ENCODE measurements at regions of chr11 and their contacts with region 1.

Region 1: GRCh38 chr11:43282607-43283440 is 29.0 kb upstream of the API5 start:
- DNase-seq: peak; percentile 25 to 54 (median 51)
- H3K4me3 ChIP-seq: no peak overlapping the region
- H3K27ac ChIP-seq: no peak overlapping the region
- H3K4me1 ChIP-seq: no peaks in the 10 kb centered on the region
- H3K27me3 ChIP-seq: peaks cover 0 to 16% (median 9%) of the 10 kb centered on the region in 5 experiments

Region 2: GRCh38 chr11:42770444-42771065 is 512.3 kb before region 1 on chr11:
- CTCF ChIA-PET with region 1: interaction called, 14 read pairs
- POLR2A ChIA-PET with region 1: no interaction called
- DNase-seq: peak; percentile 22 to 48 (median 31)
- H3K4me3 ChIP-seq: no peak overlapping the region
- H3K27ac ChIP-seq: no peak overlapping the region
- H3K4me1 ChIP-seq: no peaks in the 10 kb centered on the region
- H3K27me3 ChIP-seq: peaks cover 0 to 3% (median 0%) of the 10 kb centered on the region in 5 experiments

Region 3: DNA sequence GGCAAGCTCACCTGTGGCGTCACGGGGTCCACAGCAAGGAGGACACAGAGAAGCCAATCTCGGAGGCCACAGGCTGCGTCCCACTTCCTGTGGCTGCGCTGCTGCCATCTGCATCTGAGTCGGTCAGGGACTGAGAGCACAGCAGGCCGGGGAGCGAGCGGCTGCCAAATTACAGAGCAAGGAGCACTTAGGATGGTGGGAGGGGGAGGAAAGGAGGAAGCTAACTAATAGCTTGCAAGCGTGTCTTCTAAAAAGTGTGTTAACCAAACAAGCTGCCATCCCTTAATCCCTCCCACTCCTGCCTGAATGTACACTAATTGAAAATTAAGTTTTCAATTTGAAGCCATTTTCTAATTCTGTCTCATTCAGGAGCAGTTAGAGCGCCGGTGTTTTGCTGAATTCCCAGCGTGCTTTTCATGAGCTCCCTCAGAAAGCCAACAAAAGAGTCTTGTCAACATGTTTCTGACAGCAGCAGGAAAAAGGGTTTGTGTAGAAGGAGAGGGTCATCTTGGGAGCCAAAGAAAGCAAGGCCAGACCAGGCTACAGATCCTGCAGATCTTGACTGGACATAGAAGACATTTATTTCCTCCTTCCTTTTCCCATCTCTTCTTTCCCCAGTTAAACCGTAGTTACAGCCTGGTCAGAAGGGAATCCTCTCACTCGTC is 13.4 kb before region 1 on chr11:
- CTCF ChIA-PET with region 1: interaction called, 11 read pairs
- POLR2A ChIA-PET with region 1: no interaction called
- DNase-seq: peak in 2 of 3 donors; percentile 11 to 19
- H3K4me3 ChIP-seq: peak overlapping the region in 2 of 7 experiments; percentile 12
- H3K27ac ChIP-seq: no peak overlapping the region
- H3K4me1 ChIP-seq: no peaks in the 10 kb centered on the region
- H3K27me3 ChIP-seq: peaks cover 0 to 3% (median 0%) of the 10 kb centered on the region in 5 experiments

Region 4: GRCh38 chr11:43298397-43298796 is 15.6 kb after region 1 on chr11:
- CTCF ChIA-PET with region 1: interaction called, 13 read pairs
- POLR2A ChIA-PET with region 1: no interaction called
- DNase-seq: no peak
- H3K4me3 ChIP-seq: no peak overlapping the region
- H3K27ac ChIP-seq: no peak overlapping the region
- H3K4me1 ChIP-seq: no peaks in the 10 kb centered on the region
- H3K27me3 ChIP-seq: peaks cover 0 to 5% (median 2%) of the 10 kb centered on the region in 5 experiments

Measured in common myeloid progenitor, CD34-positive (primary cell).